OCI-LY7 (cell line): ENCODE measurements at regions of chr20 and their contacts with region 1.

Region 1: DNA sequence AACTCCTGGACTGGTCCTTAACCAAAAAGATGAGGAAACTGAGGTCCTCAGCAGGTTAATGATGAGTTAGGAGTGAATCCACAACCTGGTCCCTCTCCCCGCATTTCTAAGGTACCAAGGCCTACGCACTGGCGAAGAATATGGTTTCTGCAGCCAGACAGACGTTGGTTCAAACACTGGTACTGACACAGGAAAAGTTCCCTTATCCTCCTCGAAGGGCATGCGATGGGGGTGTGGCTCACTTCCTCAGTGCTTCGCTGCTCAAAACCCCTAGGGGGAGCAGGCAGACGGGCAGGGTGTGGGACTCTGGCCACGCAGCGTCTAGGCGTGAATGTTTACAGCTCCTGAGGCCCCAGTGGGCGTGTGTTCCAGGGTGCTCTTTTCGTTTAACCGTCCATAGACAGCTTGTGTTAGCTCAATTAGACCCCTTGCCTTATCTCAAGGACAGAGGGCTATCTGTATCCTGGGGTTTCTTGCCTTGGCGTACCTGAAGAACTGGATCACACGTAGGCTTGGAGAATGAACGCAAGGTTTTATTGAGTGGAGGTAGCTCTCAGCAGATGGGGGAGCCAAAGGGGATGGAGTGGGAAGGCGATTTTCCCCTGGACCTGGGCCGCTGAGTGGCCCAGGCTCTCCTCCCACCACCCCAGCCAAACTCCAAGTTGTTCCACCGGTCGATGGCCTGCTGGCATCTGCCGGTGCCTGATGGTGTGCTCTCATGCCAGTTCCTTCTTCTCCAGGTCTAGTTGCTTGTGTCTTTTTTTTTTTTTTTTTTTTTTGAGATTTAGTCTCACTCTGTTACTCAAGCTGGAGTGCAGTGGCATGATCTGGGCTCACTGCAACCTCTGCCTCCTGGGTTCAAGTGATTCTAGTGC is 31.8 kb upstream of the PTPN1 start:
- DNase-seq: peak; percentile 78
- H3K4me3 ChIP-seq: no peak overlapping the region
- H3K27ac ChIP-seq: no peak overlapping the region
- H3K4me1 ChIP-seq: peaks cover under 1% of the 10 kb centered on the region
- CTCF ChIP-seq: peak; percentile 84

Region 2: GRCh38 chr20:50438986-50439407 is 39.4 kb before region 1 on chr20:
- CTCF ChIA-PET with region 1: no interaction called
- POLR2A ChIA-PET with region 1: no interaction called
- intact Hi-C with region 1: no loop called
- DNase-seq: no peak
- H3K4me3 ChIP-seq: no peak overlapping the region
- H3K27ac ChIP-seq: no peak overlapping the region
- H3K4me1 ChIP-seq: peaks cover 17% of the 10 kb centered on the region
- CTCF ChIP-seq: no peak

Region 3: DNA sequence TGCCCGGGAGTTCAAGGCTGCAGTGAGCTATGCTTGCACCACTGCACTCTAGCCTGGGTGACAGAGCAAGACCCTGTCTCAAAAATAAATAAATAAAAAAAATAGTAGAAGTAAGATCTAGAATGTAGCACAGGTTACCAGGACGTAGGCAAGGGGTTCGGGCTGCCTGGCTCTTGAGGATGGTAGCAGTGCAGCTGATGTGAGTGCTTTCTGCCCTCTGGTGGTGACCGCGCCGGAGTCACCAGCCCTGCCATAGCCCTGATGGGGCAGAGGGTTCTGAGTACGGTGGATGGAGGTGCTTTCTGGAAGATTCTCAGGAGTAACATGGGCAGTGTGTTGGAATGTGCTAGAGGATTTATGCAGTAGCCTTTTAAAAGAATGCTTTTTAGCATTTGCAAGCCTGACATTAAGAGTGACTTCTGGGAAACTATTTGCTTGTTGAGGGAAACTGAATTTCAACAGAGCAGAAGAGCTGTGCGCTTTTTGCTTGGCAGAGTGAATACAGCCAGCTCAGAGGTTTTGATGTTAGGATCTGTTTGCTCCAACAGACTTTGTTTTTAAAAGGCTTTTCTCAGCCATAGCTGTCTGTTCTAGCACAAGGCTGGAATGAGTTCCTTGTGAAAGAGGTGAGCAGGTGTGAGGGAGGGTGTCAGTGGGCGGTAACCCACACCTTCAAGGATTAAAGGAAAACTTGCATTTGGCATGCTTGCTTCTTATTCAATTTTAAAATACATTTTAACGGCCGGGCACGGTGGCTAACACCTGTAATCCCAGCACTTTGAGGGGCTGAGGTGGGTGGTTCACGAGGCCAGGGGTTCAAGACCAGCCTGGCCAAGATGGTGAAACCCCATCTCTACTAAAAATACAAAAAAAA is 97.7 kb after region 1 on chr20:
- CTCF ChIA-PET with region 1: no interaction called
- POLR2A ChIA-PET with region 1: interaction called, 3 read pairs
- intact Hi-C with region 1: loop called (anchors 2 kb)
- DNase-seq: peak; percentile 70
- H3K4me3 ChIP-seq: no peak overlapping the region
- H3K27ac ChIP-seq: no peak overlapping the region
- H3K4me1 ChIP-seq: peaks cover 6% of the 10 kb centered on the region
- CTCF ChIP-seq: peak; percentile 87